ENCODE measurements at regions of chr1 and their contacts with region 1.

Region 1: DNA sequence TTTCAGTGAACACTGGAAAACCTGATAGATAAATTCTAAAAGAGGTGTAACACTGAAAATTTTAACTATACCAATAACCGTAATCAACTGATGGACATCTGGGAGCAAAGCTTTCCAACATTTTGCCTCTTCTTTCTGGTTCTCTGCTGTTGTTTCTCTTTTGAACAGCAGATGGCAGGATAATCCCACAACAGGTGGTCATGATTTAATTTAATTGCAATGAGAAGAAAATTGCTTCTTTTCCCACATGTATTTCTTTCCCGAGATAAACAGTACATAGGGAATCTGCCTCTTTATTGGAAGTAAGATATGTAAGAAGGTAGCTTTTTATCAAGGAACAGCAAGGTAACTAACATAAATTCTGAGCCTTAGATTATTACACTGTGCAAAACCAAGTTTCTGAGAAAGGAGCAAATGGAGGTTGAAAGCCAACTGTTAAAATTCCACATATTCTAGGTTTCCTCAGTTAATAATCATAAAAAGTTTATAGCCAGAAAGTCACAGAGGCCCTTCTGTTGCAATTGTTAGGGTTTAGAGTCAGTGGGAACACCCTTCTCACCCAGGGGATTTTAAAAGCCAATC is 72.9 kb downstream of the RPS6KA1 start:
- DNase-seq: peak; percentile 69
- H3K4me3 ChIP-seq: no peak overlapping the region
- H3K27ac ChIP-seq: no peak overlapping the region
- H3K4me1 ChIP-seq: no peaks in the 10 kb centered on the region
- H3K27me3 ChIP-seq: no peaks in the 10 kb centered on the region
- CTCF ChIP-seq: peak; percentile 88

Region 2: GRCh38 chr1:26677306-26678115 is 75.0 kb after region 1 on chr1:
- intact Hi-C with region 1: loop called (anchors 2 kb)
- DNase-seq: peak; percentile 93
- H3K4me3 ChIP-seq: no peak overlapping the region
- H3K27ac ChIP-seq: peak overlapping the region; percentile 15
- H3K4me1 ChIP-seq: no peaks in the 10 kb centered on the region
- H3K27me3 ChIP-seq: no peaks in the 10 kb centered on the region
- CTCF ChIP-seq: peak; percentile 69